ENCODE measurements at regions of chr6 and their contacts with region 1.

Region 1: GRCh38 chr6:35297601-35298481 is at the start of gene DEF6:
- DNase-seq: peak; percentile 95
- H3K4me3 Mint-ChIP-seq: peak within 1 kb of the TSS; percentile 81
- H3K27ac Mint-ChIP-seq: peak within 1 kb of the TSS; percentile 94
- H3K4me1 Mint-ChIP-seq: peaks cover 41% of the 10 kb centered on the region
- H3K27me3 Mint-ChIP-seq: no peaks in the 10 kb centered on the region
- total RNA-seq, gene DEF6: 89.9 to 90.6 TPM

Region 2: GRCh38 chr6:35287671-35288396 is 10.0 kb before region 1 on chr6:
- CTCF ChIA-PET with region 1: interaction called, 16 read pairs
- intact Hi-C with region 1: no loop called
- DNase-seq: no peak
- H3K4me3 Mint-ChIP-seq: no peak overlapping the region
- H3K27ac Mint-ChIP-seq: no peak overlapping the region
- H3K4me1 Mint-ChIP-seq: no peaks in the 10 kb centered on the region
- H3K27me3 Mint-ChIP-seq: no peaks in the 10 kb centered on the region

Region 3: GRCh38 chr6:35327349-35328027 is 29.6 kb after region 1 on chr6:
- CTCF ChIA-PET with region 1: interaction called, 188 read pairs
- intact Hi-C with region 1: loop called (anchors 1 kb)
- DNase-seq: peak; percentile 91
- H3K4me3 Mint-ChIP-seq: no peak overlapping the region
- H3K27ac Mint-ChIP-seq: peak overlapping the region; percentile 70
- H3K4me1 Mint-ChIP-seq: peaks cover 19% of the 10 kb centered on the region
- H3K27me3 Mint-ChIP-seq: no peaks in the 10 kb centered on the region

Region 4: GRCh38 chr6:35368038-35368887 is 70.4 kb after region 1 on chr6:
- CTCF ChIA-PET with region 1: interaction called, 4 read pairs
- intact Hi-C with region 1: loop called (anchors 2 kb)
- DNase-seq: peak; percentile 64
- H3K4me3 Mint-ChIP-seq: no peak overlapping the region
- H3K27ac Mint-ChIP-seq: peak overlapping the region; percentile 33
- H3K4me1 Mint-ChIP-seq: peaks cover 49% of the 10 kb centered on the region
- H3K27me3 Mint-ChIP-seq: no peaks in the 10 kb centered on the region

Region 5: GRCh38 chr6:35452186-35453090 is 154.6 kb after region 1 on chr6 and contains the start of gene FANCE:
- CTCF ChIA-PET with region 1: interaction called, 103 read pairs
- intact Hi-C with region 1: loop called (anchors 1 kb)
- DNase-seq: peak; percentile 95
- H3K4me3 Mint-ChIP-seq: peak within 1 kb of the TSS; percentile 79
- H3K27ac Mint-ChIP-seq: no peak within 1 kb of the TSS
- H3K4me1 Mint-ChIP-seq: peaks cover 31% of the 10 kb centered on the region
- H3K27me3 Mint-ChIP-seq: no peaks in the 10 kb centered on the region
- total RNA-seq, gene FANCE: 16.3 TPM

Region 6: DNA sequence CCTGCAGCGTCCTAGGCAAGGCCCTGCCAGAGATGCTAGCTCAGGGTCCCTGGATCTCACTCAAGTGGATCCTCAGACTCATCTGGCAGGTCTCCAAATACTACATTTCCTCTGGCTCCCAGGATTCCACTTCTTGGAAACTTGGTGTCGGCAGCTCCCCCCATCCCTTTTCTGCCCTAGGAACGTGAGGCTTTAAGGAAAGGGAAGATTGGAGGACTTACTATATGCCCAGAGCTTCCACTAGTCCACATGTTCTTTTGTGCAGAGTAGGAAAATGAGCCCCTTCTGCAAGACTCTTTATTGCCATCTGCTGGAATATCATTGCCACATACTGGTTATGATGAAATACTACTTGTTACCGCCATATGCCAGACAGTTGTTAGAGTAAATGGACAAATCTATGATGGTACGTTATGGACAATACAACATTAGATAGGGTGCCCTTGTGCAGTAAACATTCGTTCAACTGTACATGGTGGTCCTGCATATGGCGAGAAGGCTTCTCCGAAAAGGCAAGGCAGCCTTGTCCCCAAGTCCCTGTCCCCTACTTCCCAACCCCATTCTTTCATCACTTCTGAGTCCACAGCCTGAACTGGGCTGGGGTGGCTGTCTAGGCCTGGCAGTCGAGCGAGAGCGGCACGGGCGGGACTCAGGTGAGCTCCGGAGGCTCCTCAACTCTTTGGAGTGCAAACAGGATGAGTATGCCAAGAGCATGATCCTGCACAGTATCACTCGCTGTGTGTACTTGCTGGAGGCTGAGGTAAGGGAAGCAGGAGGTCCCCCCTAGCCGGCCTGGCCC is 439.8 kb after region 1 on chr6:
- CTCF ChIA-PET with region 1: no interaction called
- intact Hi-C with region 1: loop called (anchors 1 kb)
- DNase-seq: no peak
- H3K4me3 Mint-ChIP-seq: peak overlapping the region; percentile 29
- H3K27ac Mint-ChIP-seq: peak overlapping the region; percentile 77
- H3K4me1 Mint-ChIP-seq: peaks cover 47% of the 10 kb centered on the region
- H3K27me3 Mint-ChIP-seq: no peaks in the 10 kb centered on the region